Activated B cell treated with CpG ODN at 0.5 μM for 24 hours (primary cell): ENCODE measurements at regions of chr13 and their contacts with region 1.

Region 1: GRCh38 chr13:41004875-41005693 is 14.0 kb downstream of the ELF1 start:
- DNase-seq: no peak
- ATAC-seq: peak; percentile 81
- H3K4me3 Mint-ChIP-seq: peak overlapping the region; percentile 12
- H3K27ac Mint-ChIP-seq: peak overlapping the region; percentile 71
- H3K4me1 Mint-ChIP-seq: peaks cover 75% of the 10 kb centered on the region
- H3K27me3 Mint-ChIP-seq: no peaks in the 10 kb centered on the region
- CTCF ChIP-seq: no peak

Region 2: GRCh38 chr13:39684531-39685137 is 1320.5 kb before region 1 on chr13:
- CTCF ChIA-PET with region 1: no interaction called
- POLR2A ChIA-PET with region 1: no interaction called
- intact Hi-C with region 1: no loop called
- DNase-seq: no peak
- ATAC-seq: peak; percentile 28
- H3K4me3 Mint-ChIP-seq: no peak overlapping the region
- H3K27ac Mint-ChIP-seq: no peak overlapping the region
- H3K4me1 Mint-ChIP-seq: peaks cover 14% of the 10 kb centered on the region
- H3K27me3 Mint-ChIP-seq: no peaks in the 10 kb centered on the region
- CTCF ChIP-seq: no peak

Region 3: DNA sequence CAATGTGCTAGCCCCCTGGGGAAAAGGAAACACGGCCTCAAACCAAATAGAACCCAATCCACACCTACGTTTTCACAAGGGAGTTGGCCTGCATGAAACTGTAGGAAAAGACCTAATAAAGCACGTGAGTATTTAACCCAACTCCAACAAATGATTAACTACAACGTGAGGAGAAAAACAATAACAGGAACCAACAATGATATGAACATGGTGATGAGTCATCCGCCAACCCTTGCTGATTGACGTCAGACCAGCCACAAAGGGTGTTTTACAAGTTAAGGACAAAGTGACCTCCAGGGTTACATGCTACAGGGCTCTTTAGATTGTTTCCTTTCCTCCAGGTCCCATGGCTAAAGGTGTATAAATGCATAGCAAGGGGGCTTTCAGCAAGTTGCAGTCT is 889.1 kb before region 1 on chr13:
- CTCF ChIA-PET with region 1: no interaction called
- POLR2A ChIA-PET with region 1: no interaction called
- intact Hi-C with region 1: no loop called
- DNase-seq: no peak
- ATAC-seq: peak; percentile 86
- H3K4me3 Mint-ChIP-seq: no peak overlapping the region
- H3K27ac Mint-ChIP-seq: peak overlapping the region; percentile 36
- H3K4me1 Mint-ChIP-seq: peaks cover 20% of the 10 kb centered on the region
- H3K27me3 Mint-ChIP-seq: no peaks in the 10 kb centered on the region
- CTCF ChIP-seq: no peak

Region 4: DNA sequence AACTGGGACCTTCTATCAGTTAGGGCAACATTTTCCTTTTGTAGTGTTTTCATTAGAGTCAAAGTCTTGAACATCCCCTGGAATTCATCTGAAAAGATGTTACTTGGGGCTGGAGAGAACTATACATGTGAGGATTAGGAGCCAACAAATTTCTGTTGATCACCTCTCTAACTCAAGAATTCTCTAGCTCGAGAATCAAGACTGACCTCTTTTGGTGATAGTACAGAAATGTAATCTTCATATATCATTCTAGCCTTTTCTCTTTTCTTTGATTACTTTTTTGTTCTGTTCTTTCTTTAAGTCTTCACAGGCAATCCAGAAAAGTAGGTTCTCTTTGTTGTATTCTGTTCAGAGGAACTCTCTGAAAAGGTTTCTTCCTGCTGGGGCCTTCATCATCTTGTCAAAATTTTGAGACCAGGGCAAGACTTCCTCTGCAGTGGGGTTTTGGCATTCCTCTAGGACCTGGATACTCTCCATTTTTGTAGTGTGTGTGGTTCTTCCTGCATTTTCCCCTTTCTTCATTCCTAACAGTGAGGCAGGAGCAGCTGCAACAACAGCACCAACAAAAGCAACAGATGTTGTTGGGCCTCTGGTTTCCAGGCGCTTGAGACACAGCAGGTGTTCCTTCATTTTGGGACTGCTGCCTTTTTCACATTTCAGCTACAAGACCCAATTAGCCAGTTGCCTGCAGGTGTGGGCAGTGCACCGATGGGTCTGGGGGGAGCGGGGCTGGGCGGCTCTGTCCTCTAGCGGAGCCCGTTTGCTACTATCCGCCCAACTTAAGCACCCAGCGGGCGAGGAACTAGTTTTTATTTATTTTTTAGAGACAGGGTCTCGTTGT is 12.2 kb before region 1 on chr13:
- CTCF ChIA-PET with region 1: interaction called, 3 read pairs
- POLR2A ChIA-PET with region 1: interaction called, 12 read pairs
- intact Hi-C with region 1: loop called (anchors 1 kb)
- DNase-seq: no peak
- ATAC-seq: no peak
- H3K4me3 Mint-ChIP-seq: no peak overlapping the region
- H3K27ac Mint-ChIP-seq: peak overlapping the region; percentile 60
- H3K4me1 Mint-ChIP-seq: peaks cover 84% of the 10 kb centered on the region
- H3K27me3 Mint-ChIP-seq: no peaks in the 10 kb centered on the region
- CTCF ChIP-seq: no peak

Region 5: DNA sequence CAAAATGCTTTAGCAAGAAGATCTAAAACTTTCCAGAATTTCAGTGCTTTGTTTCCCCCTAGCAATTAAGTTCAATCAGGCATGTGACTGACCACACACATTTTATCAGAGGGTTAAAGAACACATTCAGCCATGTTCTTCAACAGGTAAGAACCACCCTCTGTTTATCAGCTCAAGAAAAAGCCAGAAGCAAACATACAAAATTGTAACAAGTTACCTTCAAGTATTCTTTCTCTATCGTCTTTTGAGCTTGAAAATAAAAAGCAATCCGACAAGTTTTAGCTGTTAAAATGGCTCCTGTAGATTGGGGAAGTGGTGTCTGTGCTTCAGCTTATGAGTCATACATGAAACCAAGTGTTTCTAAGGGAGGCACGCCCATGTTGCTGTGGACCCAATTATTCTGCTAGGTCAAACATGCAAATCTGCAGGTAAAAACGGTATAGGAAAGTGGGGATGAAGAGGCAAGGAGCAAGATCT is 14.0 kb after region 1 on chr13 and contains the start of gene ELF1:
- CTCF ChIA-PET with region 1: no interaction called
- POLR2A ChIA-PET with region 1: interaction called, 59 read pairs
- intact Hi-C with region 1: loop called (anchors 1 kb)
- DNase-seq: peak; percentile 26
- ATAC-seq: peak; percentile 87
- H3K4me3 Mint-ChIP-seq: peak within 1 kb of the TSS; percentile 94
- H3K27ac Mint-ChIP-seq: peak within 1 kb of the TSS; percentile 99
- H3K4me1 Mint-ChIP-seq: peaks cover 46% of the 10 kb centered on the region
- H3K27me3 Mint-ChIP-seq: no peaks in the 10 kb centered on the region
- CTCF ChIP-seq: no peak
- total RNA-seq, gene ELF1: 129 and 136 TPM in 2 replicates

Region 6: DNA sequence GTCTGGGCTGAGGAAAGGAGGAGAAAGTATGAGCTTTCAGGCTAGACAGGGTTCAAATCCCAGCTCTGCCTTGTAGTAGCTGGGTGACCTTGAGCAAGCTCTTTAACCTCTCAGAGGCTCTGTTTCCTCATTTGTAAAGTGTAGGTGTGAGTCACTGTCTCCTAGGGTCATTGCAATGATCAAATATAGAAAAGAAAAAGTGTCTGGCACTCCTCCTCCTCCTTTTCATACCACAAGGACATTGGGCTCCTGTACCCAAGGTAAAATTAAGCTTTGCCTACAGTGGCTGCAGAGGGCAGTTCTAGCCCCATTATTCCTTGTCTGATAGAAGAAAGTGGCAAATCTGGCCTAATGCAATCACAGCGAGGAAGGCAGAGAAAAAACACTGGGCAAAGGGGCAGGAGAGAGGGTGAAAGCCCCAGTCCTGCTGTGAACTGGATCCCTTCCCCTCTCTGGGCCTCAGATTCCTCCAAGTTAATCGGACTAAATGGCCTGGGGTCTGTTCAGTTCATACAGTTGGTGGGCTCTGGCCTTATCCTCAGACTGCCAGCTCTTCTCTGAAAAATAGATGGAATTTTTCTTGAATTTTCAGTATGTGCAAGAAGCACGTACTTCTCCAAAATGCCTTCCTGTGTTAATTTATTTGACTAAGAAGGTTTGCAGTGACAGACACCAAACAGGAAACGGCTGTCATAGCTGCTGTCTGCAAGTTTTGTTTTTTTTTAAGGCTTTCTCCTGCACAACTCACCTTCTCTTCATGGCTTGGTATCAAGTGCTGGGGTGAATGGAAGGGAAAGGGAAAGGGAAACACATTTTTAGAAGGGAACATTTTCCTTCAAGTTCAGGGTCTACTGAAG is 487.5 kb after region 1 on chr13:
- CTCF ChIA-PET with region 1: no interaction called
- POLR2A ChIA-PET with region 1: no interaction called
- intact Hi-C with region 1: no loop called
- DNase-seq: no peak
- ATAC-seq: peak; percentile 77
- H3K4me3 Mint-ChIP-seq: peak overlapping the region; percentile 63
- H3K27ac Mint-ChIP-seq: peak overlapping the region; percentile 90
- H3K4me1 Mint-ChIP-seq: peaks cover 37% of the 10 kb centered on the region
- H3K27me3 Mint-ChIP-seq: no peaks in the 10 kb centered on the region
- CTCF ChIP-seq: no peak

Region 7: GRCh38 chr13:41652727-41653361 is 647.8 kb after region 1 on chr13:
- CTCF ChIA-PET with region 1: no interaction called
- POLR2A ChIA-PET with region 1: no interaction called
- intact Hi-C with region 1: no loop called
- DNase-seq: no peak
- ATAC-seq: no peak
- H3K4me3 Mint-ChIP-seq: no peak overlapping the region
- H3K27ac Mint-ChIP-seq: no peak overlapping the region
- H3K4me1 Mint-ChIP-seq: peaks cover 9% of the 10 kb centered on the region
- H3K27me3 Mint-ChIP-seq: peaks cover 41% of the 10 kb centered on the region
- CTCF ChIP-seq: no peak